ENCODE measurements at regions of chr11 and their contacts with region 1.

Region 1: DNA sequence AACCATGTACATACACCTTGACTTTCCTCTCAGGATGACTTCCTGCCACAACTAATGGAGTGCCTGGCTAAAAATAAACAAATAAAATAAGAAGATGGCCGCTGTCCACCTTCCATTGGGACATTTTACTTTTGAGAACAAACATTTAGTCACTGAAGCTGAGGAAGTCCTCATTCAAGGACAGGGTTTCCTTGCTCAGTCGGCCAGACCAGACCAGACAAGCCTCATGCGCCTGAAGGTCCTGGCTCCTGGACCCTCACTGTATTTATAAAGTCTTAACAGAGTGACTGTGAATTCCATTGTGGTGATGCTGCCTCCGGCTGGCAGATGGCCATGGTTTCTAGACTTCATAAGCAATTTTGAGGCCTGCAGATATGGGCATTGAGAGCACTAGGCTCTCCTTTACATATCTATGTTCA is 114.5 kb downstream of the MAML2 start:
- DNase-seq: no peak
- H3K4me3 Mint-ChIP-seq: no peak overlapping the region
- H3K27ac Mint-ChIP-seq: peak overlapping the region; percentile 81
- H3K4me1 Mint-ChIP-seq: peaks cover 78% of the 10 kb centered on the region
- H3K27me3 Mint-ChIP-seq: no peaks in the 10 kb centered on the region

Region 2: DNA sequence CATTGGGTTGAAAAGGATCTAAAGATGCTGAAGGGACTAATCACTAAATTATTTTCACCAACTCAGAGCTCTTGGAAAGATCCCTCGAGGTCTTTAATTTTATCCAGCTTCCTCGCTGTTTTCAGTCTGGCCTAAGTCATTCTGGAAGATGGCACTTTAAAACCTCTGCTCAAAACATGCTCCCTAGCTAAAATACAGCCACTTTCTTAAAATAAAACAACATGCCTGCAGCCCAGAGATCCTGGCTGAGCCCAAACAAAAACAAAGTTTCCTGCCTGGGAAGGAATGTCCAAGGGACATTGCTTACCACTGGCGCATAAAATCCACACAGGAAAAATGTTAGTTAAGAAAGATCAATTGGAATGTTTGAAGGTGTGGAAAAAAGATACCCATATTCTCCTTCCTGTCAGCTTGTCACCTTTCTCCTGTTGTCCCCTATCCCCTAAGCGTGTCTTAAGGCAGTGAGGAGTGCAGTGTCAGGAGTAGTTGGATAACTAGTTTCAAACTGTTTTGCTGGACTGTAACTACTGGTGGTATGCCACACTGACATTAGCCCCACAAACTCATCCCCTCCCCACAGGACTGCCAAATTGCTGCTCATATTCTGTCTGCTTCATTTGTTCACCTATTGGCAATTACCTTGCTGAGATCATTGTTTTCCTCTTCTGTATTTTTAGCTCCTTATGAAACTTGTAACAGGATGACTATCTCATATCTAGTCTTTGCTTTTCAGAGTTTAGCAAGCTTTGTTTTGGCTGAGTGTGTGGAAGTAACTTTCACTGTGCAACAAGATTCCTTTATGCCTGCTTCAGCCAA is 889.2 kb before region 1 on chr11:
- CTCF ChIA-PET with region 1: no interaction called
- intact Hi-C with region 1: no loop called
- DNase-seq: no peak
- H3K4me3 Mint-ChIP-seq: no peak overlapping the region
- H3K27ac Mint-ChIP-seq: no peak overlapping the region
- H3K4me1 Mint-ChIP-seq: peaks cover 4% of the 10 kb centered on the region
- H3K27me3 Mint-ChIP-seq: no peaks in the 10 kb centered on the region

Region 3: GRCh38 chr11:96091476-96091875 is 137.0 kb before region 1 on chr11:
- CTCF ChIA-PET with region 1: no interaction called
- intact Hi-C with region 1: no loop called
- DNase-seq: peak; percentile 26
- H3K4me3 Mint-ChIP-seq: no peak overlapping the region
- H3K27ac Mint-ChIP-seq: no peak overlapping the region
- H3K4me1 Mint-ChIP-seq: peaks cover 56% of the 10 kb centered on the region
- H3K27me3 Mint-ChIP-seq: no peaks in the 10 kb centered on the region

Region 4: DNA sequence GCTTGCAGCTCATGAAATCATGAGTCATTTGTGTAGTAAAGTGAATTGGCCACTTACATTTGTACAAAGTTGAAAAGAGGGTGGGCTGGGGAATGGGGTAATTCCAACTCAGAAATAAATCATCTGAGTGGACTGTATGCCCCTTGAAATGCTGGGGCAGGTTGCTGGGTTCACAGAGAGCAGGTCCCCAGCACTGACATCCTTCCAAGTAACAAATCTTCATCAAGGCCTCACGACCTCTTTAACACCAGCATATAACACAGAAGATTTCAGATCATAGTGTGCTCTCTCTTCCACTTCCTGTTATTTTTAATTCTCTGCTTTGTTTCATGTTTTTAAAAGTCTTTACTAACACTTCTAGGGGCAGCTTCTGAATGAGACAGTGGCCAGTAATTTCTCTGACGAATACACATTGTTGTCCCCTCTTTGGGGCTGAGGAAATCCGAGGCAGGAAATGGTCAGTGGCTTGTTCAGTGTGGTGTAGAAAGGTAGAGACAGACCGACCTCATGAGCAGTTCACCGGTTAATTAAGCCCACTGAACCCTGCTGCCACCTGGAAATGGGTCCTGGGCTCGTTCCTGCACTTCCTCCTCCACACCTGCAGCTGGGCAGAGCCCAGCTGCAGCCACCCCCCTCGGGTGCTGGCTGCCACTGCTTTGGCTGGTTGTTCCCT is 13.2 kb before region 1 on chr11:
- CTCF ChIA-PET with region 1: interaction called, 6 read pairs
- intact Hi-C with region 1: loop called (anchors 1 kb)
- DNase-seq: peak; percentile 51
- H3K4me3 Mint-ChIP-seq: peak overlapping the region; percentile 49
- H3K27ac Mint-ChIP-seq: peak overlapping the region; percentile 94
- H3K4me1 Mint-ChIP-seq: peaks cover 79% of the 10 kb centered on the region
- H3K27me3 Mint-ChIP-seq: no peaks in the 10 kb centered on the region

Measured in activated naive CD4-positive, alpha-beta T cell treated with anti-CD3 and anti-CD28 coated beads for 36 hours (primary cell).